ENCODE measurements at regions of chr2 and their contacts with region 1.

Region 1: DNA sequence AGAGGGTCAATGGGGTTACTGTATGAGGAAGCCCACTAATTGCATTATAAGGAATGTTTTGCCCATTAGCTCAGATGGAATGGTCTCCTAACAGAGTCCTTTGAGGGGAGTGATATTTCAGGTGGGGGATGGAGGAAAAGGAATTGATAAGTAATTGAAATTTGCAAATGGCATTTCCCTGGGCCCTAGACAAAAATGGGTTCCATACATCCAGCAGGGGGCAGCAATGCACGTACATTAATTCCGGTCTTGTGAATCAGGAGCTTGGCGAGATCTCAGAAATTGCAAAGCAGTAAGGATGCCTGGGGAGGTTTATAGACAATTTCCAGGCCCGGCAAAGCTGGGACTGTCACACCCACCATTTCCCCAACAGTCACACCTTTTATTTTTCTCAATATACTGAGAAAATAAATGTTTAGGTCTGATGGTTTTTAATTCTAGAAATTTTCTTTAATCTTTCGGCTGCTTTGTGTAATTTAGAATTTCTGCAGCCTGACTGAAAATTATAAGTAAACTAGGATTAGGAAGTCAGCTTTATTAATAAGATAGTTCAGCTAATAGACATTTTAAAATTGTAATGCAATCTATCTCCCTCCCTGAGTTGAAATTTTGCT is 122.8 kb downstream of the LYPD1 start:
- DNase-seq: peak; percentile 60
- H3K4me3 Mint-ChIP-seq: no peak overlapping the region
- H3K27ac Mint-ChIP-seq: no peak overlapping the region
- H3K4me1 Mint-ChIP-seq: no peaks in the 10 kb centered on the region
- H3K27me3 Mint-ChIP-seq: no peaks in the 10 kb centered on the region

Region 2: GRCh38 chr2:132609101-132609890 is 62.1 kb after region 1 on chr2:
- CTCF ChIA-PET with region 1: no interaction called
- POLR2A ChIA-PET with region 1: no interaction called
- intact Hi-C with region 1: no loop called
- DNase-seq: no peak
- H3K4me3 Mint-ChIP-seq: no peak overlapping the region
- H3K27ac Mint-ChIP-seq: no peak overlapping the region
- H3K4me1 Mint-ChIP-seq: no peaks in the 10 kb centered on the region
- H3K27me3 Mint-ChIP-seq: no peaks in the 10 kb centered on the region

Region 3: DNA sequence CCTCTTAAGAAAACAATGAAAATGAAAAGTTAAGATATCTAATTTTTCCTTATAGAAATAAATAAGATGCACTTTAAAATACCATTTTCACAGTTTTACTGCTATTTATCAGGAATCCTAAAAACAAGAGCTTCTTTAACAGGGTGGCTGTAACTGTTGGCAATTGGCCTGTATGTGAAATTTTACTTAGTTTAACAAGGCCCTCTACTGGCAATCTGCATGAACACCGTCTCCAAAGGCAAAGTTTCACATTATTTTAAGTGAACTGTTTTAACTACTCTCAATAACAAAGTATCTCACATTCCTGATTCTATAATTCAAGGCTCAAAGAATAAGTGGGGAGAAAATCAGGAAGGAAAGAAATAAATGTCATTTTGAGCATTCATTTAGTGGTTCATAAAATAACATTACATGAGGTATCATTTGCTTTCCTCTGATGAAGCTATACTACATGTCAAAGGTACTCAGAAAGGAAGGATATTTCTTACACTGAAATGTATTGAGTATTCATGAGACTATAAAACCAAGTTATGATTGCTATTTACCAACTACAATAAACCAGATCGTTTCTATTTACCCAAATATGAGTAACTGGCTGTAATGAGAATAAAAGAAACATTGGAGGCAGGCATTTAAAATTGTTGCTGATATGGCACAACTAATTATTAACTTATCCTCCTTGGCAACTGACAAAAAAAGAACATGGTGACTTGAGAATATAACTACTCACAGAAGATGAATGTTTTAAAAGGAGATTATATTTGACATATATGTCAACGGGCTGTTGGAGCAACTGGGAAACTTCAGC is 1014.1 kb after region 1 on chr2:
- CTCF ChIA-PET with region 1: no interaction called
- POLR2A ChIA-PET with region 1: no interaction called
- intact Hi-C with region 1: loop called (anchors 5 kb)
- DNase-seq: no peak
- H3K4me3 Mint-ChIP-seq: no peak overlapping the region
- H3K27ac Mint-ChIP-seq: no peak overlapping the region
- H3K4me1 Mint-ChIP-seq: no peaks in the 10 kb centered on the region
- H3K27me3 Mint-ChIP-seq: peaks cover 3% of the 10 kb centered on the region

Region 4: GRCh38 chr2:133780099-133780839 is 1233.1 kb after region 1 on chr2:
- CTCF ChIA-PET with region 1: interaction called, 10 read pairs
- POLR2A ChIA-PET with region 1: no interaction called
- intact Hi-C with region 1: loop called (anchors 2 kb)
- DNase-seq: peak; percentile 24
- H3K4me3 Mint-ChIP-seq: no peak overlapping the region
- H3K27ac Mint-ChIP-seq: no peak overlapping the region
- H3K4me1 Mint-ChIP-seq: no peaks in the 10 kb centered on the region
- H3K27me3 Mint-ChIP-seq: no peaks in the 10 kb centered on the region